ENCODE measurements at regions of chr7 and their contacts with region 1.

Region 1: GRCh38 chr7:2760098-2760889 is 72.3 kb downstream of the AMZ1 start:
- DNase-seq: no peak

Region 2: GRCh38 chr7:2621061-2621828 is 139.0 kb before region 1 on chr7:
- intact Hi-C with region 1: no loop called
- DNase-seq: no peak

Region 3: GRCh38 chr7:2807845-2808772 is 47.8 kb after region 1 on chr7:
- intact Hi-C with region 1: no loop called
- DNase-seq: no peak

Region 4: GRCh38 chr7:2863461-2864066 is 103.3 kb after region 1 on chr7:
- intact Hi-C with region 1: loop called in 1 of 2 experiments (anchors 5 kb)
- DNase-seq: peak; percentile 96